ENCODE measurements at regions of chr7 and their contacts with region 1.

Region 1: GRCh38 chr7:83936056-83936708 is 258.4 kb downstream of the SEMA3A start:
- DNase-seq: peak; percentile 74
- H3K4me3 Mint-ChIP-seq: no peak overlapping the region
- H3K27ac Mint-ChIP-seq: no peak overlapping the region
- H3K4me1 Mint-ChIP-seq: peaks cover 2% of the 10 kb centered on the region
- H3K27me3 Mint-ChIP-seq: peaks cover 2% of the 10 kb centered on the region

Region 2: DNA sequence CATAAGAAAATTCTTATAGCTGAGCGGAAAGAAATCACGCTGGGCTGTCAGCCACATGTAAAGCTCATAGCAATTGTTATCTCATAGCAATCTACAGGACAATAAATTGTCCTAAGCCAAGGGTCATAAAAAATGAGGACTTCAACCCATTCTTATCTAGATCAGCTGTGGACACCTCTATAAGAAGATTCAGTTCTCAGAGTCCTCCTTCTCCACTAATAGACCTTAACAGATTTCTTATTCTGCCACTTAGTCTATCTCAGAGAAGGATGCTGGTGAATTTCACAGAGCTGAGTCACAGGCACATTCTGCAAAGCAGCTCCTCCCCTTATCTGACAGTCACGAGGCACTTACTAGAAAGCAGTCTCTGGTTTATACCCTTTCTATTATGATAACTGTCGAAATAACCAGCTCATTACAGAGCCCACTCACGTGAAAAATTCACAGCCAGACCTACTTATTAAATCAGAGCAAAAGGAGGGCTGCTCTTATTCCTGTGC is 588.2 kb before region 1 on chr7:
- CTCF ChIA-PET with region 1: no interaction called
- intact Hi-C with region 1: no loop called
- DNase-seq: no peak
- H3K4me3 Mint-ChIP-seq: no peak overlapping the region
- H3K27ac Mint-ChIP-seq: no peak overlapping the region
- H3K4me1 Mint-ChIP-seq: no peaks in the 10 kb centered on the region
- H3K27me3 Mint-ChIP-seq: no peaks in the 10 kb centered on the region

Region 3: GRCh38 chr7:83947260-83947659 is 11.1 kb after region 1 on chr7:
- CTCF ChIA-PET with region 1: interaction called, 25 read pairs
- intact Hi-C with region 1: no loop called
- DNase-seq: peak; percentile 19
- H3K4me3 Mint-ChIP-seq: no peak overlapping the region
- H3K27ac Mint-ChIP-seq: no peak overlapping the region
- H3K4me1 Mint-ChIP-seq: no peaks in the 10 kb centered on the region
- H3K27me3 Mint-ChIP-seq: peaks cover 2% of the 10 kb centered on the region

Region 4: DNA sequence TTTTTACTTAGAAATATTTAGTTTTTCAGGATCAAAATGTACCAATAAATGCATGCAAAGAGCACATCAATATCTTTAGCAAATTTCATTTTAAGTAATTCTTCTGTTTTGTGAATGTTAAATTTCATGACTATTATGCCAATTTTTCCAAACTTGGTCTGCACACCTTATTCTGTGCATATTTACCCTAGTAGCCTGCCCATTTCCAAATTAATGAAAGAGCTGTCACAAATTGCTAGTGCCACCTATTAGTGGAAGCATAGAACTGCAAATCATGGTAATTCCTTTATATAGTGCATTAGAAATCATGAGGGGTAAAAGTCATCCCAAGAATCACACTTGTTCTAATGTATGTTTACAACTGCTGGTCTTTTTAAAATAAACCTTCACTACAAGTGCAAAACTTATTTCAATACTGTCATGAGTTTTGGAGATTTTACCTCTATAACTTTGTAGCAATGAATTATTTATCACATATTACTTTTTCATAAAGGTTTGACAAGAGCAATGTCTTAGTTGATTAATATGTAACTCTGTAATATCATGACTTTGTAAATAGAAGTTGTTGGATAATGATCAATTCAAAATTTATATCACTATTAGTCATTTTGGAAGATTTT is 252.7 kb after region 1 on chr7:
- CTCF ChIA-PET with region 1: no interaction called
- intact Hi-C with region 1: loop called (anchors 2 kb)
- DNase-seq: no peak
- H3K4me3 Mint-ChIP-seq: no peak overlapping the region
- H3K27ac Mint-ChIP-seq: no peak overlapping the region
- H3K4me1 Mint-ChIP-seq: peaks cover 36% of the 10 kb centered on the region
- H3K27me3 Mint-ChIP-seq: no peaks in the 10 kb centered on the region

Region 5: GRCh38 chr7:84454174-84454959 is 518.2 kb after region 1 on chr7:
- CTCF ChIA-PET with region 1: no interaction called
- intact Hi-C with region 1: loop called (anchors 2 kb)
- DNase-seq: no peak
- H3K4me3 Mint-ChIP-seq: no peak overlapping the region
- H3K27ac Mint-ChIP-seq: no peak overlapping the region
- H3K4me1 Mint-ChIP-seq: no peaks in the 10 kb centered on the region
- H3K27me3 Mint-ChIP-seq: peaks cover 3% of the 10 kb centered on the region

Measured in activated naive CD4-positive, alpha-beta T cell treated with anti-CD3 and anti-CD28 coated beads for 36 hours (primary cell).